IMR-90 (cell line): ENCODE measurements at regions of chr7 and their contacts with region 1.

Region 1: DNA sequence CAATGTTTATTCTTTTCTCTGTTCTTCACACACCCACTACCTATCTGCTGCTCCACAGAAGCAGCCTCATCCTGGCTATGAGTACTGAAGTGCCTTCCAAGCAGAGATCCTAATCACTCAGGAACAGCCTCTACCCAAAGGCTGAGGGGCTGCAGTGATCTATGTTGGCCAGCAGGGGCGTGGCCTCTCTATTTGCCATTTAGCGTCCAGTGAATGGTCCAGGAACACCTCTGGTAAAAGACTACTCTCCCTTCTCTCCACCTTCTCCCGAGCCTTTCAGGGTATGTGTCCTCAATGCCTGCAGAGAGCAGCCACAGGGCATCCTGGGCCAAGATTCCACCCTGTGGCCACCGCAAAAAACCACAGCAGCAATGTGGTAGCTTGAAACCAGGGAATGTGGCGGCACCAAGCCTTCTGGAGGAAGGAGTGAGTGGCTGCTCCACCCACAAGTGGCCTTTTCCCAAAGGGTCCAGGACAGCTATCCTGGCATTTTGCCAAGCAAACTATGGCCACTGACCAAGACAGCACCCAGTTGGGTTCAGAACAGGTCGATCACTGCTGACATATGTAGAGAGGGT is 70.9 kb downstream of the SYPL1 start:
- DNase-seq: peak; percentile 29
- ATAC-seq: peak; percentile 2; the same call in 1 of the 2 replicates
- H3K4me3 ChIP-seq: no peak overlapping the region
- H3K27ac ChIP-seq: peak overlapping the region; percentile 82; the same call in 1 of the 2 replicates
- H3K4me1 ChIP-seq: peaks cover 32% of the 10 kb centered on the region
- H3K27me3 ChIP-seq: peaks cover 7% of the 10 kb centered on the region
- CTCF ChIP-seq: peak; percentile 53
- POLR2A ChIP-seq: no peak
- RAD21 ChIP-seq: peak; percentile 30; the same call in 1 of the 2 replicates

Region 2: DNA sequence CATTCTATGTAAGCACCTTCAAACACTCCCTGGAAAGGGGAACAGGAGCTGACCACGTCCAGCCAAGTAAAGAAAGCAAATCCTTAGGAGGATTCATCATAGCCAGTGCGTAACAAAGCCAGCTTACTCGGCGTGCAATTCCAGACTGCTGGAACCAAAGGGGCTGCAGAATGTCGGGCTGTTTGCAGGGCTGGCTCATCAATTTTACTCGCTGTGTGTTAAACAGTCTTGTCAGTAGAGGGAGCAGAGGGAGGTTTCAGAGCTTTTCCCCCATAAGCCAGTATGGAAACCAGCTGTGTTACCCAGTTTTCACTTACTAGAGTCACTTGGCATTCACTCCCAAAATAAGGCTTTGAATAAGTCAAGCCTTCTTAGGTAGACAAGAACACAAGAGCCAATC is 900.2 kb before region 1 on chr7:
- CTCF ChIA-PET with region 1: no interaction called
- POLR2A ChIA-PET with region 1: no interaction called
- dilution Hi-C with region 1: no loop called
- in situ Hi-C with region 1: no loop called
- intact Hi-C with region 1: loop called (anchors 10 kb)
- DNase-seq: peak; percentile 54
- ATAC-seq: peak; percentile 68
- H3K4me3 ChIP-seq: no peak overlapping the region
- H3K27ac ChIP-seq: no peak overlapping the region
- H3K4me1 ChIP-seq: peaks cover 4% of the 10 kb centered on the region
- H3K27me3 ChIP-seq: no peaks in the 10 kb centered on the region
- CTCF ChIP-seq: peak; percentile 44
- POLR2A ChIP-seq: no peak
- RAD21 ChIP-seq: peak; percentile 55

Region 3: GRCh38 chr7:105589356-105590077 is 451.7 kb before region 1 on chr7:
- CTCF ChIA-PET with region 1: no interaction called
- POLR2A ChIA-PET with region 1: no interaction called
- dilution Hi-C with region 1: no loop called
- in situ Hi-C with region 1: no loop called
- intact Hi-C with region 1: loop called (anchors 10 kb)
- DNase-seq: peak; percentile 81
- ATAC-seq: peak; percentile 99
- H3K4me3 ChIP-seq: no peak overlapping the region
- H3K27ac ChIP-seq: no peak overlapping the region
- H3K4me1 ChIP-seq: no peaks in the 10 kb centered on the region
- H3K27me3 ChIP-seq: 0 out of 2 replicates have a peak, but pooled peaks cover under 1% of the 10 kb centered on the region
- CTCF ChIP-seq: peak; percentile 85
- POLR2A ChIP-seq: no peak
- RAD21 ChIP-seq: peak; percentile 81

Region 4: GRCh38 chr7:105759670-105760550 is 281.3 kb before region 1 on chr7:
- CTCF ChIA-PET with region 1: interaction called, 14 read pairs
- POLR2A ChIA-PET with region 1: no interaction called
- dilution Hi-C with region 1: no loop called
- in situ Hi-C with region 1: loop called (anchors 5 kb)
- intact Hi-C with region 1: loop called (anchors 1 kb)
- DNase-seq: peak; percentile 71
- ATAC-seq: peak; percentile 76
- H3K4me3 ChIP-seq: no peak overlapping the region
- H3K27ac ChIP-seq: peak overlapping the region; percentile 77; the same call in 1 of the 2 replicates
- H3K4me1 ChIP-seq: peaks cover 14% of the 10 kb centered on the region
- H3K27me3 ChIP-seq: no peaks in the 10 kb centered on the region
- CTCF ChIP-seq: peak; percentile 74
- POLR2A ChIP-seq: no peak
- RAD21 ChIP-seq: peak; percentile 81

Region 5: GRCh38 chr7:105776058-105776751 is 265.0 kb before region 1 on chr7:
- CTCF ChIA-PET with region 1: no interaction called
- POLR2A ChIA-PET with region 1: no interaction called
- dilution Hi-C with region 1: no loop called
- in situ Hi-C with region 1: no loop called
- intact Hi-C with region 1: loop called (anchors 1 kb)
- DNase-seq: peak; percentile 100
- ATAC-seq: peak; percentile 99
- H3K4me3 ChIP-seq: no peak overlapping the region
- H3K27ac ChIP-seq: peak overlapping the region; percentile 84
- H3K4me1 ChIP-seq: peaks cover 22% of the 10 kb centered on the region
- H3K27me3 ChIP-seq: no peaks in the 10 kb centered on the region
- CTCF ChIP-seq: no peak
- POLR2A ChIP-seq: no peak
- RAD21 ChIP-seq: no peak; the same call in 1 of the 2 replicates

Region 6: DNA sequence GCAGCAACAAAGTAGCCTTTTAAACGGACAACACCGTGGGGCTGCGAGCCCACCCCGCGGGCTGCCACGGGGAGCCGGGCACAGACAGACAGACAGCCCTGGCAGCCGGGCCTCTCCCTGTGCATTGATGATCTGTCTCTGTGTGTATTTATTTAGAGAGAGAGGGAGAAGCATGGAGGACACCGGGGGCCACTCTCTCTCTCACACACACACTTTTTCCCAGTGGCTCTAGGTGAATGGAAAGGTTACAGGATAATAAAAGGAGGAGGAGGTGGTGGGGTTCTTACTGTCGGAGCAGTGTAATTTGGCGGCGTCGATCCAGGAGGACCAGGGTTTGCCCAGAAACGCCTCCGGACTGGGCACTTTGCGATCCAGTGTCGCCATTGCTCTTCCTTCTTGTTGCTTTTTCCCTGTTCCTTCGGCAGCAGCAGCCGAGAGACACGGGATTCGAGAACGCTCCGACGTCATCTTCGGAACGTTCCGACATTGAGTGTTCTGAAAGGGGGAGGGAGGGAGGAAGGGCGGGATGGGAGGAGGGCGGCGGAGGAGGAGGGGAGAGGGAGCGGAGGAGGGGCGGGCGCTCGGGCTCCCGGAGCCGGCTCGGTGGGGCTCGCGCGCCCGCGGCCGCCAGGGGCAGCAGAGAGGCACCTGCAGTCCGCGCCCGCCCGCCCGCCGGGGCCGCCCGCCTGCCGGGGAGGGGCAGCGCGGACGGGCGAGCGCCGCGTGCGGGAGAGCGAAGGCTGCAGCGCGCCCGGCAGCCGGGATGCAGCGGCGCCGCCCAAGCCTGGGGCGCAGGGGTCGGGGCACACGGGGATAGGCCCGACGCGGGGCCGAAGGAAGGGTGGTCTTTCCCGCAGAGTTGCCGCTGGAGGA is 164.9 kb before region 1 on chr7 and contains the start of gene ATXN7L1:
- CTCF ChIA-PET with region 1: interaction called, 3 read pairs
- POLR2A ChIA-PET with region 1: no interaction called
- dilution Hi-C with region 1: no loop called
- in situ Hi-C with region 1: no loop called
- intact Hi-C with region 1: loop called (anchors 1 kb)
- DNase-seq: peak; percentile 98
- ATAC-seq: peak; percentile 97
- H3K4me3 ChIP-seq: peak within 1 kb of the TSS; percentile 82
- H3K27ac ChIP-seq: peak within 1 kb of the TSS; percentile 91
- H3K4me1 ChIP-seq: peaks cover 9% of the 10 kb centered on the region; the same call in 1 of the 2 replicates
- H3K27me3 ChIP-seq: no peaks in the 10 kb centered on the region
- CTCF ChIP-seq: peak; percentile 72
- POLR2A ChIP-seq: peak; percentile 87
- RAD21 ChIP-seq: peak; percentile 49
- total RNA-seq, gene ATXN7L1: 4.3 and 4.7 TPM in 2 replicates

Region 7: GRCh38 chr7:105990726-105991453 is 50.3 kb before region 1 on chr7:
- CTCF ChIA-PET with region 1: no interaction called
- POLR2A ChIA-PET with region 1: no interaction called
- dilution Hi-C with region 1: no loop called
- in situ Hi-C with region 1: no loop called
- intact Hi-C with region 1: no loop called
- DNase-seq: no peak
- ATAC-seq: no peak
- H3K4me3 ChIP-seq: no peak overlapping the region
- H3K27ac ChIP-seq: no peak overlapping the region
- H3K4me1 ChIP-seq: peaks cover 2% of the 10 kb centered on the region; the same call in 1 of the 2 replicates
- H3K27me3 ChIP-seq: peaks cover 56% of the 10 kb centered on the region
- CTCF ChIP-seq: no peak
- POLR2A ChIP-seq: no peak
- RAD21 ChIP-seq: no peak

Region 8: GRCh38 chr7:106009403-106010226 is 31.6 kb before region 1 on chr7:
- CTCF ChIA-PET with region 1: interaction called, 3 read pairs
- POLR2A ChIA-PET with region 1: no interaction called
- dilution Hi-C with region 1: no loop called
- in situ Hi-C with region 1: no loop called
- intact Hi-C with region 1: loop called (anchors 1 kb)
- DNase-seq: peak; percentile 98
- ATAC-seq: peak; percentile 84
- H3K4me3 ChIP-seq: no peak overlapping the region
- H3K27ac ChIP-seq: peak overlapping the region; percentile 95
- H3K4me1 ChIP-seq: peaks cover 26% of the 10 kb centered on the region
- H3K27me3 ChIP-seq: no peaks in the 10 kb centered on the region
- CTCF ChIP-seq: peak; percentile 98
- POLR2A ChIP-seq: no peak
- RAD21 ChIP-seq: peak; percentile 87